T47D (cell line): ENCODE measurements at regions of chr10 and their contacts with region 1.

Region 1: DNA sequence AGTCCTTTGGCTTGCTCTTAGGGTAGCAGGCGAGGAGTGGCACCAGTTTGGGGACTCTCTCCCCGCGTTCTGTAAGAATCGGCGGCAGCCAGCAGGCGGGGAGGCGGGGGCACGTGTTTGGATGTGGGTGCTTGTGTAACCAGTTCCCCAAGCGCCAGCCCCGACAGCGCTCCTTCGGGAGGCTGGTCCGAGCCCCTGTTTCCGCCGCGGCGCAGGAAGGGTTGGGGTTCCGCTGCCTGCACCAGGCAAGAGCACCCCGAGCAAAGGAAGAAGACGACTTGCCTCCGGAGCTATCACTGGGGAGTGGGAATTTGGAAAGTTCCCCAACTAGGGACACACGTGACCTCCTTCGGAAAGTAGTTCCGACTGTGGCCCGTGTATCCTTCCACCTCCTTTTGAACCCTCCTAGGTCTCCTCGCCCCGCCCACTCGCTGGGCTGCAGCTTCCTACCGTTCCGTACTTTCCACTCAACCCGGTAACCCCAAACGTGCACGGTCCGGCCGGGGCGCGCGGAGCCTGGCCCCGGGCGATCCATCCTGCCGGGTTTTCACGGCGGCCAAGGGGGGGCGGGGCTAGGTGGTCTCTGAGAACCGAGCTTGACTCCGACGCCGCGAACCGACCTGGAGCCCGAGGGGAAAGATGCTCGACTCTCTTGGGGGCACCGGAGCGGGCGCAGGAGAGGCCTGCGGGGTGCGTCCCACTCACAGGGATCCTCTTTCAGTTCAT is 1.2 kb downstream of the KLLN start:
- DNase-seq: peak; percentile 93 to 100

Region 2: DNA sequence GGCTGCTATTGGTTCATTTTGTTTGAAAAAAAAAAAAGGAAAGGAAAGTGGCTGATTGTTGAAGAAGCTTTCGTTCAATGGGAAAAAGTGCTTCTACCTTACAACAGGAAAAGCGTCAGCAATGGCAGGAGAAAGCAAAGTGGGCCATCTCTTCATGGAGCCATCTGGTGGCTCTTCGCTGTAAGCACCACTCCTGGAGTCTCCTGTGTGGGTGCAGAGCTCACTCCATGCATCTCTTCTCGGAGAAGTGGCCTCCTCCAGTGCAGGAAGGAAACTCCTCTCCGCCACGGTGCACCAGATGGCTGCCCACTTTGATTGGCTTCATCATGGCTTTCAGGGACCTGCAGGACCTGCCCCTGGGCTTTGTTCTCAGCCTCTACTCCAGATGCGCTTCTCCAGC is 252.3 kb after region 1 on chr10:
- in situ Hi-C with region 1: loop called (anchors 25 kb)
- DNase-seq: peak; percentile 70 to 83